Activated naive CD4-positive, alpha-beta T cell treated with anti-CD3 and anti-CD28 coated beads for 36 hours (primary cell): ENCODE measurements at regions of chr10 and their contacts with region 1.

Region 1: DNA sequence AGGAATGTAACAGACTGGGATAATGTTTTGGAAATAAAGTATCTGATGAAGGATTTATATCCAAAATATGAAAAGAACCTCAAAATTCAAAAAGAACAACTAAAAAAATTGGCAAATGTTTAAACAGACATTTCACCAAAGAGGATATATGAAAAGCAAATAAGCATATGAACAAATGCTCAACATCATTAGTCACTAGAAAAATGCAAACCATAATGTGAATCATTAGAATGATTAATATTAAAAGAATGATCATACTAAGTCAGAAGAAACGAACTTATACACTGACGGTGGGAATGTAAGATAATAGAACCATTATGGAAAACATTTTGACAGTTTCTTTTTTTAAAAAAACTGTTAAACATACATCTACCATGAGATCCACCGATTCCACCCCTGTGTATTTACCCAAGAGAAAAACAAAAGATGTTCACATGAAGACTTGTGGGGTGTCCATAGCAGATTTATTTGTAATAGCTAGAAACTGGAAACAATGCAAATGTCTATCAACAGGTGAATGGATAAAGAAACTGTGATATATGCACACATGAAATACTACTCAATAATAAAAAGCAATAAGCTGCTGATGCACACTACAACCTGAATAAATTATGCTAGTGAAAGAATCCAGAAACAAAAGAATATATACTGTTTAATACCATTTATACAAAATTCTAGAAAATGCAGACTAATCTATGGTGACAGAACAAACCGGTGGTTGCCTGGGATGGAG is 35.7 kb downstream of the PRKG1 start:
- DNase-seq: no peak
- H3K4me3 Mint-ChIP-seq: no peak overlapping the region
- H3K27ac Mint-ChIP-seq: no peak overlapping the region
- H3K4me1 Mint-ChIP-seq: no peaks in the 10 kb centered on the region
- H3K27me3 Mint-ChIP-seq: peaks cover 3% of the 10 kb centered on the region

Region 2: GRCh38 chr10:51129946-51130544 is 20.1 kb after region 1 on chr10:
- CTCF ChIA-PET with region 1: interaction called, 11 read pairs
- intact Hi-C with region 1: no loop called
- DNase-seq: no peak
- H3K4me3 Mint-ChIP-seq: no peak overlapping the region
- H3K27ac Mint-ChIP-seq: no peak overlapping the region
- H3K4me1 Mint-ChIP-seq: no peaks in the 10 kb centered on the region
- H3K27me3 Mint-ChIP-seq: no peaks in the 10 kb centered on the region